OCI-LY7 (cell line): ENCODE measurements at regions of chr9 and their contacts with region 1.

Region 1: DNA sequence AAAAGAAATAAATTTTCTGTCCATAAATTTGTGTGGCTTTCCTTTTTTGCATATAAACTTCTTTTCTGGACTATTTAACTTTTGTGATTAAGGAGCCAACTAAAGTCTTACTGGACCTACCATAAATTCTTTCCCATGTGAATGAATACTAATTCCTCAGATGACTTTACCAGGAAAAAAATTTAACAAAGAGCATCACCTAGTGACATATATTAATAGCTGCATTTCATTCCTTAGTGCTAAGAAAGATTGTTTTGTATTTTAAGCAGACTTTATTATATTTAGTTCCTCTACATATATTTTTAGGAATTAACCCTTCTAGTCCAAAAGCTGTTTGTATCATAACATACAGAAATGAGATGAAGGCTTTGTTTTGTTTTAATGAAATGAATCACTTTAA is 64.4 kb downstream of the C9orf85 start:
- DNase-seq: peak; percentile 19
- H3K4me3 ChIP-seq: no peak overlapping the region
- H3K27ac ChIP-seq: no peak overlapping the region
- H3K4me1 ChIP-seq: no peaks in the 10 kb centered on the region
- CTCF ChIP-seq: peak; percentile 74

Region 2: DNA sequence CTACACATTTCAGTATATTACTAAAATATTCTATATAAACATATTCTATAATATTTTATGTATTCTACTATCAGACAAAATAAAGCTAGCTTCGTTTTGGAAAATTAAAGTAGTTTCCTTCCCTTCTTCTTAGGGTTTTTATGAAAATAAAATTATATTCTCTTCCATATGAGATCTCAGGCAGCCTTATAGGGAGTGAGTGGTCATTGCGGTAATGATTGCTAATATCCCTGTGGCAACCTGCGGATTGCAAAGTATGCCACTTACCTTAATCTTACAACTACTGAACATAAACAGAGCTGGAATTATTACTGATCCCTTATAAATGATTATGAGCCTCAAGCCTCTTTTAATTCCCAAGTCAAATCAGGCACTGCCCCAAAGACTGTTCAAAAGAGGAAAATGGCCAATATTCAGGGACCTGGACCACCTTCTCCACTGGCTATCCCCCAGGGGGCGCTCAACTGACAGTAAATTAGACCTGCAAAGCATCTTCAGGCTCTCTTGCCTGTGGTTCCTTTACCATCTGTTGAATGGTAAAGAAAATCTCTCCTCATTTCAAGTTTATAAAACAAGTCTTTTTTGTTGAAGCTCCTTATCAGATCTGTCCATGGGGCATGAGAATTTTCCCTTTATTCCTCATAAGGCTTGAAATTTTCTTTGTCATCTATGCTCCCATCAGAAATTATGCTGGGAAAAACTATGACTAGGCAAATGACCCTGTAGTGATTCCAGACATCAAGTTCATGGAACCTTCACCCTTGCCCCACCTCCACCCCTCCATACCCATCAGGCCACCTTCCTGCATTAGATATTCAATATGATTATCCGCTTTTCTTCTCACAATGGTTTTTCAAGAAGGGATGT is 371.4 kb before region 1 on chr9:
- CTCF ChIA-PET with region 1: no interaction called
- POLR2A ChIA-PET with region 1: no interaction called
- intact Hi-C with region 1: loop called (anchors 5 kb)
- DNase-seq: peak; percentile 69
- H3K4me3 ChIP-seq: no peak overlapping the region
- H3K27ac ChIP-seq: no peak overlapping the region
- H3K4me1 ChIP-seq: no peaks in the 10 kb centered on the region
- CTCF ChIP-seq: peak; percentile 91

Region 3: GRCh38 chr9:71806901-71807307 is 168.9 kb before region 1 on chr9:
- CTCF ChIA-PET with region 1: no interaction called
- POLR2A ChIA-PET with region 1: no interaction called
- intact Hi-C with region 1: loop called (anchors 2 kb)
- DNase-seq: peak; percentile 88
- H3K4me3 ChIP-seq: no peak overlapping the region
- H3K27ac ChIP-seq: no peak overlapping the region
- H3K4me1 ChIP-seq: peaks cover 3% of the 10 kb centered on the region
- CTCF ChIP-seq: peak; percentile 99